ENCODE measurements at regions of chr12 and their contacts with region 1.

Region 1: GRCh38 chr12:21438643-21439042 is 1.2 kb downstream of the PYROXD1 start:
- DNase-seq: no peak
- H3K4me3 Mint-ChIP-seq: peak overlapping the region; percentile 95
- H3K27ac Mint-ChIP-seq: peak overlapping the region; percentile 95
- H3K4me1 Mint-ChIP-seq: peaks cover 41% of the 10 kb centered on the region
- H3K27me3 Mint-ChIP-seq: peaks cover 5% of the 10 kb centered on the region

Region 2: DNA sequence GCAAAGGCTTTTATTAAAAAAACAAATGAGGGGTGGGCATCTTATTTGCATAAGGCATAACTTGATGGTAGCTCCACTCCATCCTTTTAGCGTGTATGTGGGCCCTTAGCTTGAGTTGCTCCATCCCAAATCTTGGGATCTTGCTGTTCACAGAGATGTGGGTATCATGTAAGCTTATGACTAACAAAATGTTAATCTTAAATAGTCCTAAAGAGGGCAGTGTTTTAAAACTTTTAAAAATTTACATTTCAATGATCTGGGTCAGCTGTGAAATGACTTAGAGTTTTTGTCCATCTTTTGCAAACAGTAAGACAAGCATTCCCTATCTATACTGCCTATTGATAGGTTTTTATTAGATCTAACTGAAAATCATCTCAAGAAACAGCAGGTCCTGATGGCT is 190.0 kb before region 1 on chr12:
- intact Hi-C with region 1: loop called (anchors 2 kb)
- DNase-seq: no peak
- H3K4me3 Mint-ChIP-seq: no peak overlapping the region
- H3K27ac Mint-ChIP-seq: no peak overlapping the region
- H3K4me1 Mint-ChIP-seq: no peaks in the 10 kb centered on the region
- H3K27me3 Mint-ChIP-seq: peaks cover 2% of the 10 kb centered on the region

Region 3: GRCh38 chr12:21451529-21451928 is 12.9 kb after region 1 on chr12:
- intact Hi-C with region 1: loop called (anchors 1 kb)
- DNase-seq: no peak
- H3K4me3 Mint-ChIP-seq: no peak overlapping the region
- H3K27ac Mint-ChIP-seq: no peak overlapping the region
- H3K4me1 Mint-ChIP-seq: peaks cover 50% of the 10 kb centered on the region
- H3K27me3 Mint-ChIP-seq: no peaks in the 10 kb centered on the region

Region 4: DNA sequence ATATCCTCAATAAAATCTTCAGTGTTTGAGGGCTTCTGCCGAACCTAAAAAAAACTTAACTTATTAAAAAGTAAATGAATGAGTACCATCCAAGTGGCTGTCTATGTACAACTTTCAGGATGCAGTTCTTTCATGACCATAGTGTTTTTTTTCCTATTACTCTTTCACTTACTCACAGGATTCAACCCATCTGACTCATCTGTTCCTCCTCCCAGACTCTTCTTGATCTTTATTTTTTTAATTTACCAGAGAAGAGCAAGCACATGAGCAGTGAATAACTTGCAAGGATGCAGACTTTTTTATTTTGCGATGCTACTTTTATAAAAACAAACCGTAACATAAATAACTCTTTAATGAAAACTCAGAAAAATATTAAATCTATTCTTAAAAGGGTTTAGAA is 38.3 kb after region 1 on chr12:
- intact Hi-C with region 1: loop called (anchors 2 kb)
- DNase-seq: no peak
- H3K4me3 Mint-ChIP-seq: no peak overlapping the region
- H3K27ac Mint-ChIP-seq: peak overlapping the region; percentile 83
- H3K4me1 Mint-ChIP-seq: peaks cover 22% of the 10 kb centered on the region
- H3K27me3 Mint-ChIP-seq: no peaks in the 10 kb centered on the region

Region 5: DNA sequence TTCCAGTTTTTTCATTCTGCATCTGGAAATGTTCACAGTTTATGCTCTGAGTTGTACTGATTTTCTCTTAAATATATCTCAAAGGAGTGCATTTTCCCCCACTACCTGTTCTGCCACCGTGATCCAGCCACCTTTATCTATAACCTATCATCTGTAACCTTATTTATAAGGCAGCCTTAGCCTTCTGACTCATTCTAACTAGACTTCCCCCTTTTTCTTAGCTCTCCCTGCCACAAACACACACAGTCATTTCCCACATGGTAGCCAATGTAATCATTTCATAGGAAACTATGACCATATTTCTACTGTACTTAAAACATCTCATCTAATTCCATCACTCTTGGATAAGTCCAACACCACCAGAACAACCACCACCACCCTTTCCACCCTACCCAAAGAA is 176.8 kb after region 1 on chr12:
- intact Hi-C with region 1: loop called (anchors 5 kb)
- DNase-seq: no peak
- H3K4me3 Mint-ChIP-seq: peak overlapping the region; percentile 46
- H3K27ac Mint-ChIP-seq: peak overlapping the region; percentile 45
- H3K4me1 Mint-ChIP-seq: peaks cover 46% of the 10 kb centered on the region
- H3K27me3 Mint-ChIP-seq: peaks cover 2% of the 10 kb centered on the region

Region 6: DNA sequence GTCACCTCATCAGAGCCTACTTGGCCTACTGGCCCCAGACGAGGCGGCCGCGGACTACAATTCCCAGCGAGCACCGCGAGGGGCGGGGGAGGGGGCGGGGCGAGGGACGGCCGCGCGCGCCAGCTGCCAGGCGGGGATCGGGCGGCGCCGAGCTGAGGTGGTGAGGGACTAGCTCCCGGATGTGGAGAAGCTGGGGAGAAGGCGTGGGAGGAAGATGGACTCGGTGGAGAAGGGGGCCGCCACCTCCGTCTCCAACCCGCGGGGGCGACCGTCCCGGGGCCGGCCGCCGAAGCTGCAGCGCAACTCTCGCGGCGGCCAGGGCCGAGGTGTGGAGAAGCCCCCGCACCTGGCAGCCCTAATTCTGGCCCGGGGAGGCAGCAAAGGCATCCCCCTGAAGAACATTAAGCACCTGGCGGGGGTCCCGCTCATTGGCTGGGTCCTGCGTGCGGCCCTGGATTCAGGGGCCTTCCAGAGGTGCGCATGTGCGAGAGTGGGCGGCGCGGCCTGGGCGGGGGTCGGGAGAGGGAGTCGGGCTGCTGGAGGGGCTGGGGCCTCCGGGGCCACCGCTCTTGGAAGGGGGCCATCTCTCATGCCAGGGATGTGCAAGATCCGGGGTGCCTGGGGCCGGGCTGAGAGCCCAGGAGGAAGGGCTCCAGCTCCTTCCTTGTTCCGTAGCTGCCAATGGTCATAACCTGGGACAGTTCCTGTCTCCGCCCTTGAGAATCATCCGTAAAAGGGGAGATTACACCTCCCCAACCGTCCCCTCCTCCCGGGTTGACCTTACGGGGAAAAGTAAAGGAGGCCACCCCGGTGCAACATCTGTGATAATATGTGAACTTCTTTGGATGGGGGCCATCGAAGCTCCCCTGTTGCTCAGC is 607.7 kb after region 1 on chr12 and contains the start of gene CMAS:
- intact Hi-C with region 1: loop called (anchors 10 kb)
- DNase-seq: peak; percentile 70
- H3K4me3 Mint-ChIP-seq: peak within 1 kb of the TSS; percentile 95
- H3K27ac Mint-ChIP-seq: peak within 1 kb of the TSS; percentile 88
- H3K4me1 Mint-ChIP-seq: peaks cover 48% of the 10 kb centered on the region
- H3K27me3 Mint-ChIP-seq: no peaks in the 10 kb centered on the region
- total RNA-seq, gene CMAS: 34.1 and 34.9 TPM in 2 replicates